ENCODE measurements at regions of chr3 and their contacts with region 1.

Region 1: DNA sequence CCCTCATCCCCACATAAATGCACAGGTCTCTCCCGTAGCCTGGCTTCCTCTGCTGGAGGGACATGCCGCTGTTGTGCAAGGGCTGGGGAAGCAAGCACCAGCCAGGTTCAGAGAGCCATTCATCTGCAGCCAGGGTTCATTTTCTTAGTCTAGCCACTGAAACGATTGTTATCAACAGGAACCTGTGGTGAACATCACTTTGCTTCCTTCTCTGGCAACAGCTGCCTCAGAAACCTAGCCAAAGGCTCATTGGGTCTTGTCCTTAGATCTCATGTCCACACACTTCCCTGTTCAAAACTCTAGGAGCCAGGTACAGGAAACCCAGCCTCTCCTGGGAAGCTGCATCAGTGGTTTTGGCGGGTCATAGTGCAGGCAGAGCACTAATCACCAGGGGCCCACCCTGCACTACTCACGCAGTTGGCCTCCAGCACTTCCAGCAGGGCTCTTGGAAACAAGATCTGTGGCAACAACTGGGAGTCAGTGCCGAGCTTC is 47.0 kb downstream of the OXNAD1 start:
- H3K4me3 Mint-ChIP-seq: no peak overlapping the region
- H3K27ac Mint-ChIP-seq: no peak overlapping the region
- H3K4me1 Mint-ChIP-seq: peaks cover 28% of the 10 kb centered on the region
- H3K27me3 Mint-ChIP-seq: no peaks in the 10 kb centered on the region

Region 2: DNA sequence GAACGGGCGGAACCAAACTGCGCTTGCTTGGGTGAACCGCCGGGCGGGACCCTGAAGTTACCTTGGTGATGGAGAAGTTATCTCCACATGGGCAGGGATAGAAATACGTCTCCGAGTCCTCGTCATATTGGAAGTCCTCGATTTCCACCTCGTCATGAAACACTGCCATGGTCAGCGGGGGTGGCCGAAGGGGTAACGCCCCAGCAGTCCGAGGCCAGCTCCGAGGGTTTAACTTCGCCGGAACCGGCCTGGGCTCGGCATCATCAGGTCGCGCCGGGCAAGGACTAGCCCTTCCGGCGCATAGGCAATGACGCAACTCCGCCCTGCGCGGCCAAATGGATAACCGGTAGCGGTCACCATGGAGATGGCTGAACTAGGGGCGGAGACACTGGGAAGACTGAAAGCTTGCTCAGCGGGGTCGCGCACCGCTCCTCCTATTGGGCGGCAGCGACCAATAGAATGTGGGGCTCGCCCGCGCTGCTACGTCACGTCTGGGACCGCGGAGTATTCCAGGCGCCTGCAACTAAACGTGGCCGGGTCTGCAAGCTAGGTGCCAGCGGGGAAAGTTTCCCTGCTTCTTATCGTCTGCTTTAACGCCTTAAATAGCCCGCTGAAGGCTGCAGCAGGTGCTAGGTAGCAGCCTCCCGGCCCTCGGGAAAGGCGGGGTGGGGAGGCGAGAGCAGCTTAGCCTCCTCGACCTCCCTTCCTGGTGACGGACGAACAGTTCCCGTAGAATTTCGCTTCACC is 47.1 kb before region 1 on chr3 and contains the starts of genes DPH3 and OXNAD1:
- intact Hi-C with region 1: no loop called
- H3K4me3 Mint-ChIP-seq: peak within 1 kb of the TSS; percentile 93
- H3K27ac Mint-ChIP-seq: peak within 1 kb of the TSS; percentile 89
- H3K4me1 Mint-ChIP-seq: peaks cover 20% of the 10 kb centered on the region
- H3K27me3 Mint-ChIP-seq: no peaks in the 10 kb centered on the region

Region 3: DNA sequence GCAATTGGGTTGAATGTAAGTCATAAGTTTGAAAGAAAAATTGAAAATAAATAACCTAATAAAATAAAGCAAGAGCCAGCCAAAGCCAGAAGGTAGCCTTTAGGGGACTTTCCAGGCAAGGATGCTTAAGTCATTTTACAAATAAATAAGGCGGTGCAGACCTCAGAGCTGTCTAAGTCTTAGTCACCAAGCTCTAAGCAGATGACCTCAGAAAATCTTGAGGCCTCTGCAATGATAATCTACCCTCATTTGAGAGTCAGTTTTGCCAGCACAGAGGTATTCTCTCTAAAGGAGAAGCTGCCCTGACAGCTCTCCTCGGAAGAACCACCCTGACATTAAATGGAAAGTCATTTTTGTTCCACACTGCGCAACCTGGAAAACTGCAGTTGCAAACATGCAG is 66.9 kb after region 1 on chr3:
- intact Hi-C with region 1: loop called (anchors 10 kb)
- H3K4me3 Mint-ChIP-seq: no peak overlapping the region
- H3K27ac Mint-ChIP-seq: peak overlapping the region; percentile 69
- H3K4me1 Mint-ChIP-seq: peaks cover 60% of the 10 kb centered on the region
- H3K27me3 Mint-ChIP-seq: no peaks in the 10 kb centered on the region